Keratinocyte (primary cell): ENCODE measurements at regions of chr17 and their contacts with region 1.

Region 1: DNA sequence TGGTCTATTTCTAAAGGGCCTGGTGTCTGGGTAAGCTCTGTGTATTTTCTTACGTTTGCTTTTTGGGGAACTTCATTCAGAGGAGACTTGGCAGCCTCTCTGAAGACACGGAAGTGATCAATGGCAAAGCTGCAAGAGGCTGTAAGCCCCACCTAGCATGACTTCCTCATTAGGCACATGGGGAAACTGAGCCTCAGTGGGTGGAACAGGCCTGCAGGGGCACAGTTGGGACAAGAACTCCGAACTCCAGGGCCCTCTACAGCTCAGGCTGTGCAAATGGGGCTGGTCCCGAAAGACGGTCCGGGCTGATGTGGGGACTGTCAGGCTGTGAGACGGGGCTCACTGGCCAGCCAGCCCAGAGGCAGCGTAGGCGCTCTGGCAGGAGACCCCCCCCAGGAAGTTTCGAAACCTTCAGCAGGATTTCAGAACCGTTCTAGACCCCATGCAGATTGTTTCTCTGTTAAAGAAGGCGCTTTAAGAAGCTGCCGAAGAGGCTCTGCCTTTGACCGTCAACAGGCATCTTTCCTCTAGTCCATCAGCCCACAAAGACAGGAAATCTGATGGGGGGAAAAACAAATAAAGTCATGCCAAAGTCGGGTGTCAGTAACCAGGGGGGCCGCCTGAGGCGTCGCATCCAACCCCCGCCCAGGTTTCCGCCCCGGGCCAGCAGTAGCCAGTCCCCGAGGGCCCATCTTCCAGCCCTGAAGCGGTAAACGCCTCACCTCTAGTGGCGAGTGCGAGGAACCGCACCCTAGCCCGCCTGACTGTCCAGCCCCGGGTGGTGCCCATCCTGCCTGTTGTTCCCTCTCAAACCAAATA is 79.8 kb upstream of the TBC1D3K start:
- DNase-seq: no peak
- H3K4me3 ChIP-seq: no peak overlapping the region
- H3K27ac ChIP-seq: no peak overlapping the region
- H3K4me1 ChIP-seq: peaks cover 9% of the 10 kb centered on the region
- H3K27me3 ChIP-seq: peaks cover 6% of the 10 kb centered on the region
- CTCF ChIP-seq: peak; percentile 66 to 85 (median 80)

Region 2: DNA sequence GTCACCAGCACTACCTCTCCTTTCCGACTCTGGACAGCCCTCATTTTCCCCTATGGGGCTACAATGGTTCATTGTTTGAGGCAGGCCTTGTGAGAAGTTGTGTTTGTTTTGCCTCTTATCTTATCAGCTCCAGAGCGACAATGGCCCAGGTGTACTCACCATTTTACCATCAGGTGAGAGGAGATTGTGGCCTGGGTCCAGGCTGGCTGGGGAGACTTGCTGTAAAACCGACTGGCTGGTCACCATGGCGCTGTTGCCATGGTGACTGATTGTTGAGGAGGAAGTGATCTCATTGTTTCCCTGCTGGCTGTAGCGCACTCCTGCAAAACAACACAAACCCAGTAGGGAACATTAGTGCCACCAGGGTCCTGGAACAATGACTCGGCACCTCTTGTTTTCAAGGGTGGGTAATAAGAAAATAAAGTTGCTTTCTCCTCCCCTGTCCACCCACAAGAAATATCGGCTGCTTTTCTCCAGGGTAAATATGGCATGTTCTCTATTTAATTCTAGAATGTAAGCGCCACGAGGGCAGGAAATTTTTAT is 134.0 kb before region 1 on chr17:
- dilution Hi-C with region 1: loop called (anchors 10 kb)
- DNase-seq: no peak
- H3K4me3 ChIP-seq: no peak overlapping the region
- H3K27ac ChIP-seq: no peak overlapping the region
- H3K4me1 ChIP-seq: no peaks in the 10 kb centered on the region
- H3K27me3 ChIP-seq: peaks cover 15% of the 10 kb centered on the region
- CTCF ChIP-seq: no peak